K562 (cell line): ENCODE measurements at regions of chr14 and their contacts with region 1.

Region 1: GRCh38 chr14:90060312-90060964 is 1.4 kb upstream of the KCNK13 start:
- DNase-seq: peak; percentile 62 to 78 (median 64)
- ATAC-seq: peak; percentile 98
- H3K4me3 ChIP-seq: peak overlapping the region; percentile 28
- H3K27ac ChIP-seq: no peak overlapping the region
- H3K4me1 ChIP-seq: peaks cover 0 to 21% of the 10 kb centered on the region in 2 experiments; a peak in 2 of 5 replicates
- H3K27me3 ChIP-seq: peaks cover 6 to 39% of the 10 kb centered on the region in 2 experiments; a peak in 3 of 5 replicates
- CTCF ChIP-seq: peak; percentile 60 to 68 (median 63)
- EP300 ChIP-seq: no peak
- POLR2A ChIP-seq: no peak
- RAD21 ChIP-seq: peak; percentile 27 to 65

Region 2: GRCh38 chr14:89936658-89937185 is 123.7 kb before region 1 on chr14:
- CTCF ChIA-PET with region 1: no interaction called
- POLR2A ChIA-PET with region 1: no interaction called
- in situ Hi-C with region 1: no loop called
- intact Hi-C with region 1: loop called (anchors 5 kb)
- DNase-seq: no peak
- ATAC-seq: no peak
- H3K4me3 ChIP-seq: no peak overlapping the region
- H3K27ac ChIP-seq: no peak overlapping the region
- H3K4me1 ChIP-seq: no peaks in the 10 kb centered on the region
- H3K27me3 ChIP-seq: no peaks in the 10 kb centered on the region
- CTCF ChIP-seq: no peak
- EP300 ChIP-seq: no peak
- POLR2A ChIP-seq: no peak
- RAD21 ChIP-seq: no peak

Region 3: GRCh38 chr14:89973234-89973823 is 87.1 kb before region 1 on chr14:
- CTCF ChIA-PET with region 1: interaction called, 8 read pairs
- POLR2A ChIA-PET with region 1: no interaction called
- in situ Hi-C with region 1: no loop called
- intact Hi-C with region 1: loop called (anchors 2 kb)
- DNase-seq: peak; percentile 32 to 55 (median 48)
- ATAC-seq: peak; percentile 92
- H3K4me3 ChIP-seq: no peak overlapping the region
- H3K27ac ChIP-seq: no peak overlapping the region
- H3K4me1 ChIP-seq: no peaks in the 10 kb centered on the region
- H3K27me3 ChIP-seq: no peaks in the 10 kb centered on the region
- CTCF ChIP-seq: peak; percentile 58 to 69 (median 58)
- EP300 ChIP-seq: no peak
- POLR2A ChIP-seq: no peak
- RAD21 ChIP-seq: peak in 1 of 2 experiments; percentile 55; a peak in 2 of 4 replicates

Region 4: DNA sequence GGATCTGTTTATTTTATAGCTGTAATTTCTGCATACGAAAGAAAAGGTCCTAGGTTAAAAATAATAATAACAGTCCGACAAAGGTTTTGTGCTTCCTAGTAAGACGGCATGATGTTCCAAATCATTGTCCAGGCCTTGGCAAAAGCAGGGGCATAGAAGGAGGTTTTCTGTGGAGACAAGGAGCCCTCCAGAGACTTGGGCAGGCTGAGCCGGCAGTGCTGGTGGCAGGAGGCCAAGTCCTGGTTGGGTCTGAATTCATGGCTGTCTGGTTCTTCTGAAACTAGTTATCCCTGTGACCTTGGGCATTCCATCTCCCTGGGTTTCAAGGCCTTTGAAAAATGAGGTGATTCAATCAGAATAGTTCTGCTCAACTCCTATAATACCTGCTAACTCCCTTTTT is 45.3 kb after region 1 on chr14:
- CTCF ChIA-PET with region 1: no interaction called
- POLR2A ChIA-PET with region 1: no interaction called
- in situ Hi-C with region 1: no loop called
- intact Hi-C with region 1: no loop called
- DNase-seq: no peak
- ATAC-seq: no peak
- H3K4me3 ChIP-seq: no peak overlapping the region
- H3K27ac ChIP-seq: no peak overlapping the region
- H3K4me1 ChIP-seq: no peaks in the 10 kb centered on the region
- H3K27me3 ChIP-seq: peaks cover 4 to 18% of the 10 kb centered on the region in 2 experiments; a peak in 4 of 5 replicates
- CTCF ChIP-seq: no peak
- EP300 ChIP-seq: no peak
- POLR2A ChIP-seq: no peak
- RAD21 ChIP-seq: no peak